K562 (cell line): ENCODE measurements at regions of chr11 and their contacts with region 1.

Region 1: DNA sequence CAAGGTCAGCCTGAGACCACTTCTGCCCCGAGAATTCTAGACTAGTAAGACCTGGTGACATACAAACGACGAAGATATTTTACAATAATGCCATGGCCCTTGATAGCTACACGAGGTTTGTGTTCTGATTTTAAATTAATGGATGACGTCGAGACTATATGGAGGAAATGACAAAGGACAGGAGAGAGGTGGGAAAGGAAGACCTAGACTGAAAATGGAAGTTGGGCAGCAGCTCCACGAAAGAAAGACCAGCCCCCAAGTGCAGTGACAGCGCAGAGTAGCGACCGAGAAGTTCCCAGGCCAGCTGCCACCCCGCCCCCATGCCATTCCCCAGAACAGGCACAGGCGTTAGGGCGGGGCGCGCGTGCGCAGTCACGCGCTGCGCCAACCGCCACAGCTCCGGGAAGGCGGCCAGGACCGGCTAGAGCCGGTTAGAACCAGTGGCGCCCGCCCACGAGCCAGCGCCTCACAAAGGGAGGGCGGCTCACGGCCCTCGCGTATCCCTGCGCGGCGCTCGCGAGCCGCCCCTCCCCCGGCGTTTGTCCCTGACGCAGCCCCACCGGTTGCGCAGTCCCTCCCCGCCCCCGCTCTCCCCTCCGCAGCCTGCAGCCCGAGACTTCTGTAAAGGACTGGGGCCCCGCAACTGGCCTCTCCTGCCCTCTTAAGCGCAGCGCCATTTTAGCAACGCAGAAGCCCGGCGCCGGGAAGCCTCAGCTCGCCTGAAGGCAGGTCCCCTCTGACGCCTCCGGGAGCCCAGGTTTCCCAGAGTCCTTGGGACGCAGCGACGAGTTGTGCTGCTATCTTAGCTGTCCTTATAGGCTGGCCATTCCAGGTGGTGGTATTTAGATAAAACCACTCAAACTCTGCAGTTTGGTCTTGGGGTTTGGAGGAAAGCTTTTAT is 1.5 kb upstream of the MALAT1 start:
- DNase-seq: peak; percentile 86 to 100 (median 90)
- ATAC-seq: peak; percentile 76
- H3K4me3 ChIP-seq: peak overlapping the region; percentile 84
- H3K27ac ChIP-seq: peak overlapping the region; percentile 99
- H3K4me1 ChIP-seq: peaks cover 36 to 38% of the 10 kb centered on the region in 2 experiments
- H3K27me3 ChIP-seq: no peaks in the 10 kb centered on the region
- CTCF ChIP-seq: peak in 1 of 3 experiments; percentile 5; a peak in 1 of 6 replicates
- EP300 ChIP-seq: peak; percentile 99
- POLR2A ChIP-seq: peak; percentile 82
- RAD21 ChIP-seq: peak in 1 of 2 experiments; percentile 47

Region 2: GRCh38 chr11:65134386-65135253 is 362.8 kb before region 1 on chr11 and contains the start of gene SYVN1:
- CTCF ChIA-PET with region 1: no interaction called
- POLR2A ChIA-PET with region 1: interaction called, 14 read pairs
- in situ Hi-C with region 1: no loop called
- intact Hi-C with region 1: no loop called
- DNase-seq: peak; percentile 91 to 98 (median 94)
- ATAC-seq: peak; percentile 93
- H3K4me3 ChIP-seq: peak within 1 kb of the TSS; percentile 96
- H3K27ac ChIP-seq: peak within 1 kb of the TSS; percentile 98
- H3K4me1 ChIP-seq: peaks cover 21 to 49% of the 10 kb centered on the region in 2 experiments; a peak in 4 of 5 replicates
- H3K27me3 ChIP-seq: no peaks in the 10 kb centered on the region; a peak in 1 of 5 replicates
- CTCF ChIP-seq: no peak
- EP300 ChIP-seq: peak; percentile 32; the same call in 1 of the 2 replicates
- POLR2A ChIP-seq: peak; percentile 90
- RAD21 ChIP-seq: peak; percentile 24; a peak in 2 of 4 replicates
- polyA plus RNA-seq, gene SYVN1: 0.41 to 0.63 TPM

Region 3: GRCh38 chr11:65338676-65339075 is 158.7 kb before region 1 on chr11:
- CTCF ChIA-PET with region 1: no interaction called
- POLR2A ChIA-PET with region 1: interaction called, 119 read pairs
- in situ Hi-C with region 1: no loop called
- intact Hi-C with region 1: no loop called
- DNase-seq: peak in 2 of 4 experiments; percentile 39 to 51
- ATAC-seq: peak; percentile 52
- H3K4me3 ChIP-seq: no peak overlapping the region
- H3K27ac ChIP-seq: peak overlapping the region; percentile 50
- H3K4me1 ChIP-seq: peaks cover 17 to 20% of the 10 kb centered on the region in 2 experiments; a peak in 4 of 5 replicates
- H3K27me3 ChIP-seq: no peaks in the 10 kb centered on the region
- CTCF ChIP-seq: no peak
- EP300 ChIP-seq: no peak
- POLR2A ChIP-seq: no peak
- RAD21 ChIP-seq: no peak

Region 4: DNA sequence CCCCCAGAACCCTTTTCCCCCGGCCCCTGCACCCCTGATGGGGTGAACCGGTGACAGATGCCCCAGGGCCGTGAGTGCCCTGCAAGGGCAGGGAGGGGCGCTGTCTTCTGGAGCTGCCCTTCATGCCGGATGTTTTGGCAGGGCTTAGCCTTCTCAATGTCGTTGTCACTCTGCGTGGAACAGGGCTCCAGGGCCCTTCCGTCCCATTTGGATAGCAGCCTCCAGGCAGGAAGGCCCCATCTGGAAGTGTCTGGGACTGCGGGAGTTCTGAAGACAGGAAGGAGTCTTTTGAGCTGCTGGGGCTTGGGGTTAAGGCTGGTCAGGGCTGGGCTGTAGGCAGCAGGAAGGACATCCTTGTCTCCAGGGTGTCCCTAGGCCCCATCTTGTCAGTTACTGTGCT is 106.4 kb before region 1 on chr11:
- CTCF ChIA-PET with region 1: no interaction called
- POLR2A ChIA-PET with region 1: interaction called, 253 read pairs
- in situ Hi-C with region 1: no loop called
- intact Hi-C with region 1: no loop called
- DNase-seq: no peak
- ATAC-seq: no peak
- H3K4me3 ChIP-seq: no peak overlapping the region
- H3K27ac ChIP-seq: no peak overlapping the region
- H3K4me1 ChIP-seq: peaks cover 17 to 57% of the 10 kb centered on the region in 2 experiments
- H3K27me3 ChIP-seq: no peaks in the 10 kb centered on the region
- CTCF ChIP-seq: no peak
- EP300 ChIP-seq: no peak
- POLR2A ChIP-seq: no peak
- RAD21 ChIP-seq: no peak

Region 5: GRCh38 chr11:65432686-65433582 is 64.5 kb before region 1 on chr11:
- CTCF ChIA-PET with region 1: interaction called, 4 read pairs
- POLR2A ChIA-PET with region 1: interaction called, 1,349 read pairs
- in situ Hi-C with region 1: no loop called
- intact Hi-C with region 1: no loop called
- DNase-seq: peak in 1 of 4 experiments; percentile 62
- ATAC-seq: no peak
- H3K4me3 ChIP-seq: no peak overlapping the region
- H3K27ac ChIP-seq: no peak overlapping the region
- H3K4me1 ChIP-seq: peaks cover 3 to 29% of the 10 kb centered on the region in 2 experiments; a peak in 4 of 5 replicates
- H3K27me3 ChIP-seq: no peaks in the 10 kb centered on the region
- CTCF ChIP-seq: peak; percentile 27 to 61 (median 32); a peak in 3 of 6 replicates
- EP300 ChIP-seq: no peak
- POLR2A ChIP-seq: peak; percentile 64
- RAD21 ChIP-seq: peak; percentile 59 to 71

Region 6: DNA sequence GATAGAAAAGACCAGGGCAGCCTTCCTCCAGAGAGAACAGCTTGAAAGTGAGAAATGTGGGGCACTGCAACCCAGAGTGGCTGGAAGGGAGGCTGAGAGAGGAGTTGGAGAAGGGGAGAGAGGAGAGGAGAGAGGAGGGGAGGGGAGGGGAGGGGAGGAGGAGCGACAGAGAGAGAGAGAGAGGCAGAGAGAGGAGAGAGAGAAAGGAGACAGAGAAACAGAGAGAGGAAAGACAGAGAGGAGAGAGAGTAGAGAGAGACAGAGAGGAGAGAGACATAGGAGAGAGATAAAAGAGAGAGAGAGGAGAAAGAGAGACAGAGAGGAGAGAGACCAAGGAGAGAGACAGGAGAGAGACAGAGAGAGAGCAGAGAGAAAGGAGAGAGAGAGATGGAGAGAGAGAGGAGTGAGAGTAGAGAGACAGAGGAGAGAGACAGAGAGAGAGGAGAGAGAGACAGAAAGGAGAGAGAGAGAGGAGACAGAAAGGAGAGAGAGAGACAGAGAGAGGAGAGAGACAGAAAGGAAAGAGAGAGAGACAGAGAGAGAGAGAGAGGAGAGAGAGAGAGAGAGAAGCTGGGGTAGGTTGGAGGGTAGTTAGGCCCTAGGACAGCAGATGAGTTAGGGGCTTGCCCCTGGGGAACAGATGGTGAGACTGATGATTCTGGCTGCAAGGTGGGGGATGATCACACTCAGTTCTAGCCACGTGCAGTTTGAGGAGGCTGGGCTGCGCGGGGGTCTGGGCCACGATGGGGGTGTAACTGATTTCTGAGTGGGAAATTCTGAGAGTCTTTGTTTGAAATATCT is 18.9 kb after region 1 on chr11:
- CTCF ChIA-PET with region 1: no interaction called
- POLR2A ChIA-PET with region 1: interaction called, 198 read pairs
- in situ Hi-C with region 1: no loop called
- intact Hi-C with region 1: no loop called
- DNase-seq: no peak
- ATAC-seq: peak; percentile 62
- H3K4me3 ChIP-seq: no peak overlapping the region
- H3K27ac ChIP-seq: no peak overlapping the region
- H3K4me1 ChIP-seq: peaks cover 0 to 12% of the 10 kb centered on the region in 2 experiments; a peak in 2 of 5 replicates
- H3K27me3 ChIP-seq: no peaks in the 10 kb centered on the region
- CTCF ChIP-seq: no peak
- EP300 ChIP-seq: no peak
- POLR2A ChIP-seq: no peak
- RAD21 ChIP-seq: no peak

Region 7: DNA sequence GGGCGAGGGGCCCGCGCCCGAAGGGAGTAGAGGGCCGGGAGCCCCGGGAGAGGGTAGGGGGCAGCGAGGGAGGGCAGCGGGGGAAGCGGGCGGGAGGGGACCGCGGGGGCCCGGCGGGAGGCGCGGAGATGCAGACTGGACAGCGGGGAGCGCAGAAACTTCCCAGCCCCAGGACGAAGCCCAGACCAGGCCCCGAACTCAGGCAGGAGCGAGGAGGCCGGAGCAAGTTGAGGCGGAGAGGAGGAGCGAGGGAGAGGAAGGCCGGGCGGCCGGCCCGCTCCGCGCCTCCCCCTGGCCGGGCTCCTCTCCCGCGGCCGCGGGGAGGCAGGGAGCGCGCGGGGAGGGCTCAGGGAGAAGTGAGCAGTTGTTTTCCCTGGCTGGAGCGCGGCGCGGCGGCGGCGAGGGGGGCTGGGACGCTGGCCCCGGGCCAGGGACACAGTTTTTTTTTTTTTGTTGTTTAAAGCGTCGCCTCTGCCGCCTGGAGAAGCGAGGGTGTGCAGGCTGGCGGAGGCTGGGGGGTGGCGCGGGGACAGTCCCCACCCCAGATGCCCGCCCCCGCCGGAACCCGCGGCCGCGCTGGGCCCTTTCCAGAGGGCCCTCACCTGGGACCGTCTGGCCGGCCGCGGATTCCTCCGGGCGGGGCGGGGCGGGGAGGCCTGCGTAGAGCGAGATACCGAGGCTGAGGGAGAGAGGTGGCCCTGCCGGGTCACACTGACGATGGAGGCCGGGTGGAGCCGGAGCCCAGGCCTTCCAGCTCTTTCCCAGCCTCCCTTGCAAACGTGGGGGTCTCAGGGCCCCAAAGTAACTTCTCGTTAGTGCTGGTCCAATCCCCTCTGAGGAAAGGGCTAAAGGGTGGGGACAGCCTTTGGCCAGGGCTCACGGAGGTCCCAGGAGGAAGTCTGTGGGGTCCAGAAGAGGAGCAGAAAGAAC is 60.9 kb after region 1 on chr11 and contains the start of gene LTBP3:
- CTCF ChIA-PET with region 1: no interaction called
- POLR2A ChIA-PET with region 1: interaction called, 16 read pairs
- in situ Hi-C with region 1: no loop called
- intact Hi-C with region 1: no loop called
- DNase-seq: peak; percentile 85 to 90 (median 88)
- ATAC-seq: peak; percentile 87
- H3K4me3 ChIP-seq: peak within 1 kb of the TSS; percentile 41
- H3K27ac ChIP-seq: peak within 1 kb of the TSS; percentile 68
- H3K4me1 ChIP-seq: peaks cover 54 to 81% of the 10 kb centered on the region in 2 experiments
- H3K27me3 ChIP-seq: no peaks in the 10 kb centered on the region
- CTCF ChIP-seq: peak in 1 of 3 experiments; percentile 2; a peak in 2 of 6 replicates
- EP300 ChIP-seq: peak; percentile 4; the same call in 1 of the 2 replicates
- POLR2A ChIP-seq: peak; percentile 42; the same call in 1 of the 2 replicates
- RAD21 ChIP-seq: no peak
- polyA plus RNA-seq, gene LTBP3: 0.06 to 0.14 TPM

Region 8: DNA sequence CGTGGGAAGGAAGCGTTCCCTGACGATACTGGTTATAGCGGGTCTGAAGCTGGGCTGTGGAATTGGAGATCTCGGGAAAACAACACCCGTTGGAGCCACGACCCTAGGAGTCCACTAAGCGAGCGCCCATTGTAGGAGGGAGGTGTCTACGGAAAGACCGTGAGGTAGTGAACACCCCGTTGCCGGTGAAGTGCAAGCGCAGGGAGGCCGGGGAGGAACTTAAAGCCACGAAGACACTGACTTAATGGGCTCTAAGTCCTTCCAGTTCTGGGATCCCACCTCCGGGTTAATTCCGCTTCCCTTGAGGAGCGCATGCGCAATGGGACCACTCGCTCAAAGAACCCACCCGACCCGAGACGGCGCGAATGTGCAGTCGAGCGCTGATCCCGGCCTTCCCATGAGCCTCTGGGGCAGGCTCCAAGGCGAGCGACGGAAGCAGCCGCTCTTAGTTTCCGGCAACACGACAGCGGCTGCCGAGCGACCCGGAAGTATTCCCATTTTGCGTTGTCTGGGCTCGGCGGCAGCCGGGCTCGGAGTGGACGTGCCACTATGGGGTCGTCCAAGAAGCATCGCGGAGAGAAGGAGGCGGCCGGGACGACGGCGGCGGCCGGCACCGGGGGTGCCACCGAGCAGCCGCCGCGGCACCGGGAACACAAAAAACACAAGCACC is 464.0 kb after region 1 on chr11 and contains the start of gene SART1:
- CTCF ChIA-PET with region 1: no interaction called
- POLR2A ChIA-PET with region 1: no interaction called
- in situ Hi-C with region 1: no loop called
- intact Hi-C with region 1: no loop called
- DNase-seq: peak; percentile 95 to 99 (median 97)
- ATAC-seq: peak; percentile 97
- H3K4me3 ChIP-seq: peak within 1 kb of the TSS; percentile 100
- H3K27ac ChIP-seq: peak within 1 kb of the TSS; percentile 96
- H3K4me1 ChIP-seq: peaks cover 12 to 39% of the 10 kb centered on the region in 2 experiments; a peak in 4 of 5 replicates
- H3K27me3 ChIP-seq: no peaks in the 10 kb centered on the region
- CTCF ChIP-seq: no peak
- EP300 ChIP-seq: peak; percentile 64; the same call in 1 of the 2 replicates
- POLR2A ChIP-seq: peak; percentile 96
- RAD21 ChIP-seq: no peak; a peak in 2 of 4 replicates
- polyA plus RNA-seq, gene SART1: 4.8 to 7.2 TPM

Region 9: GRCh38 chr11:66371627-66372415 is 874.4 kb after region 1 on chr11 and contains the start of gene SLC29A2:
- CTCF ChIA-PET with region 1: no interaction called
- POLR2A ChIA-PET with region 1: no interaction called
- in situ Hi-C with region 1: no loop called
- intact Hi-C with region 1: no loop called
- DNase-seq: peak; percentile 95 to 97 (median 96)
- ATAC-seq: peak; percentile 93
- H3K4me3 ChIP-seq: peak within 1 kb of the TSS; percentile 93
- H3K27ac ChIP-seq: peak within 1 kb of the TSS; percentile 99
- H3K4me1 ChIP-seq: peaks cover 21 to 47% of the 10 kb centered on the region in 2 experiments; a peak in 4 of 5 replicates
- H3K27me3 ChIP-seq: no peaks in the 10 kb centered on the region
- CTCF ChIP-seq: no peak
- EP300 ChIP-seq: no peak
- POLR2A ChIP-seq: peak; percentile 84; the same call in 1 of the 2 replicates
- RAD21 ChIP-seq: no peak
- polyA plus RNA-seq, gene SLC29A2: 2.4 to 2.5 TPM